Activated naive CD4-positive, alpha-beta T cell treated with anti-CD3 and anti-CD28 coated beads for 36 hours (primary cell): ENCODE measurements at regions of chr1 and their contacts with region 1.

Region 1: GRCh38 chr1:156226116-156226538 is 13.3 kb downstream of the PMF1 start:
- DNase-seq: peak; percentile 59
- H3K4me3 Mint-ChIP-seq: no peak overlapping the region
- H3K27ac Mint-ChIP-seq: peak overlapping the region; percentile 100
- H3K4me1 Mint-ChIP-seq: peaks cover 59% of the 10 kb centered on the region
- H3K27me3 Mint-ChIP-seq: no peaks in the 10 kb centered on the region

Region 2: GRCh38 chr1:155940531-155940992 is 285.6 kb before region 1 on chr1:
- CTCF ChIA-PET with region 1: no interaction called
- intact Hi-C with region 1: loop called (anchors 10 kb)
- DNase-seq: no peak
- H3K4me3 Mint-ChIP-seq: no peak overlapping the region
- H3K27ac Mint-ChIP-seq: peak overlapping the region; percentile 90
- H3K4me1 Mint-ChIP-seq: peaks cover 65% of the 10 kb centered on the region
- H3K27me3 Mint-ChIP-seq: no peaks in the 10 kb centered on the region

Region 3: GRCh38 chr1:156129706-156130581 is 96.2 kb before region 1 on chr1:
- CTCF ChIA-PET with region 1: interaction called, 23 read pairs
- intact Hi-C with region 1: loop called (anchors 1 kb)
- DNase-seq: peak; percentile 93
- H3K4me3 Mint-ChIP-seq: no peak overlapping the region
- H3K27ac Mint-ChIP-seq: no peak overlapping the region
- H3K4me1 Mint-ChIP-seq: peaks cover 50% of the 10 kb centered on the region
- H3K27me3 Mint-ChIP-seq: peaks cover 4% of the 10 kb centered on the region

Region 4: DNA sequence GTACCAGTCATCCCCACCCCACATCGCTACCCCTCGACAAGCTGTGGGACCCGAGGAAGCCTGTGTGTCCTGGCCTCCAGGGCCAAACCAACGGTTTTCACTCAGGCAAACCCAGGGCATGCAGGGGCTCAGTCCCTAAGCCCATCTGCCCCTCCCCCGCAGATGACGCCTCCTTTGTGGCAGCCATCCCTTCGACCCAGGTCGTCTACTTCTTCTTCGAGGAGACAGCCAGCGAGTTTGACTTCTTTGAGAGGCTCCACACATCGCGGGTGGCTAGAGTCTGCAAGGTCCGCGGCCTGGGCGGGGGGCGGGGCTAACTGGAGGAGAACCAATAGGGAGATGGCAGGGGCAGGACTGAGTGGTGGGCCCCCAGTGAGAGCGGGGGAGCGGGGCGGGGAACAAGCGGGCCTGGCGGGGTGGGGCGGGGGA is 65.4 kb before region 1 on chr1:
- CTCF ChIA-PET with region 1: interaction called, 7 read pairs
- intact Hi-C with region 1: loop called (anchors 1 kb)
- DNase-seq: peak; percentile 73
- H3K4me3 Mint-ChIP-seq: peak overlapping the region; percentile 63
- H3K27ac Mint-ChIP-seq: peak overlapping the region; percentile 83
- H3K4me1 Mint-ChIP-seq: peaks cover 69% of the 10 kb centered on the region
- H3K27me3 Mint-ChIP-seq: no peaks in the 10 kb centered on the region

Region 5: GRCh38 chr1:156212833-156213643 is 13.1 kb before region 1 on chr1 and contains the start of gene PMF1:
- CTCF ChIA-PET with region 1: interaction called, 54 read pairs
- intact Hi-C with region 1: loop called (anchors 1 kb)
- DNase-seq: peak; percentile 99
- H3K4me3 Mint-ChIP-seq: peak within 1 kb of the TSS; percentile 79
- H3K27ac Mint-ChIP-seq: peak within 1 kb of the TSS; percentile 97
- H3K4me1 Mint-ChIP-seq: peaks cover 46% of the 10 kb centered on the region
- H3K27me3 Mint-ChIP-seq: no peaks in the 10 kb centered on the region
- total RNA-seq, gene PMF1: 135 TPM

Region 6: DNA sequence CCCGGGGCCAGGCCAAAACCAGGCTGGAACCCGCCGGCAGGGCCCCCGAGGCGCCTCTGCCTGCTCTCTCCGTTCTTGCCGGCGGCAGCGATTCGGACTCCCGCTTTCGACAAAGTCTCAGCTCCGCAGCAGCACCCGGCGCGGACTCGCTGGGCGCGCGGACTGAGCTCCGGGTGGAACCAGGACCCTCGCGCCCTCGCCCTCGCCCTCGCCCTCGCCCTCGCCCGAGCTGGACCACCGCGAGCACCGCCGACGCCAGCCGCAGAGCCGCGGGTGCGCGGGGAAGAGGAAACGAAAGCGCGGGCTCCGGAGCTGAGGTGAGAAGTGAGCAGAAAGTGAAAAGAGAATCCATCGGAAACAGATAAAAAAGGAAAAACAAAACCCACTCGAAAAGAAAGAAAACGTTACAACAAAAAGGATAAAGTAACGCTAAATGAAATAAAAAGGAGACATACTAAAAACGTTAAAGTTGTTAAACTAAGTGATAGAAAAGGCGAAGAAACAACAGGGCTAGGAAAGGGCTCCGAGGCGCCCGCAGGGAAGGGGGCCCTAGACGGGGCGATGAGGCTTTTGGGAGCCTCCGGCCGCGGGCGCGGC is 209.5 kb after region 1 on chr1:
- CTCF ChIA-PET with region 1: no interaction called
- intact Hi-C with region 1: no loop called
- DNase-seq: peak; percentile 46
- H3K4me3 Mint-ChIP-seq: peak overlapping the region; percentile 73
- H3K27ac Mint-ChIP-seq: no peak overlapping the region
- H3K4me1 Mint-ChIP-seq: peaks cover 42% of the 10 kb centered on the region
- H3K27me3 Mint-ChIP-seq: peaks cover 78% of the 10 kb centered on the region

Region 7: DNA sequence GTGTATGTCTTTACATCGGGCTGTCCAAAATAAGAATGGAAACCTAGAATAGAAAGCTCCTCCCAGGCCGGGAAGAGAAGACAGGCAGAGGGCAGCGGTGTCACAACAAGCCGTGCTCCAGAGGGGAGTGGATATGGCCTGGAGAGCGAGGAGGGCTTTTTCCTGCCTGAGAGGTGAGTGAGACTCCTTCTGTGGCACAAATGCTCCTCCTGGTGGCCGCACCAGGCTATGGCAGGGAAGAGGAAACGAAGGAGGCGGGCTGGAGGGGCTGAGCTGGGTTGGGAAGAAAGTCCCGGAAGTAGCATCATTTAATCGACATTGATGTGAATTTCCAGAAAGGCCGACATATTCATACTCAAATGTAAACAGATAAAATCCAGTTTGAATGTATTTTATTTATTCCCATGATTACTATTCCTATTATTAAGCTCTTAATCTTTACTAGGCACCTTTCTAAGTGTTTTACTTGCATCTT is 219.7 kb after region 1 on chr1:
- CTCF ChIA-PET with region 1: interaction called, 3 read pairs
- intact Hi-C with region 1: loop called (anchors 5 kb)
- DNase-seq: peak; percentile 93
- H3K4me3 Mint-ChIP-seq: no peak overlapping the region
- H3K27ac Mint-ChIP-seq: peak overlapping the region; percentile 22
- H3K4me1 Mint-ChIP-seq: peaks cover 21% of the 10 kb centered on the region
- H3K27me3 Mint-ChIP-seq: peaks cover 28% of the 10 kb centered on the region

Region 8: DNA sequence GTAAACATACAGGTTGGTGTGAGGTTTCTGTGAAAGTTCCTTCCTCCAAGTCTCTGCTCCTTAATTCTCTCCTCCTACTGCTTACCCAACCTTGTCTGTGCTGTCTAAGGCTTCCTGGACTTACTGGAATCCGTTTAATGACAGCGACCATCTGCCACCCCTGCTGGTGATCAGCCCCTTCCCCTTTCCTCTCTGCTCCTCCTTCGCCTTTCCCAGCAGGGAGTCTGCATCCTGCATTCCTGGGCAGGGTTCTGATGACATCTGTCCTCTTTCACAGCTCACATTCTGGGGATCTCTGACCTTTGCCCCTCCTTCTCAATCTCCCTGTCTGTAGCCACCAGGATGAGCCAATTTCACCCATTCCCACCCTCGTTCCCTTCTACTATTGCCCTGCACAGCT is 1833.9 kb after region 1 on chr1:
- CTCF ChIA-PET with region 1: no interaction called
- intact Hi-C with region 1: no loop called
- DNase-seq: no peak
- H3K4me3 Mint-ChIP-seq: no peak overlapping the region
- H3K27ac Mint-ChIP-seq: no peak overlapping the region
- H3K4me1 Mint-ChIP-seq: no peaks in the 10 kb centered on the region
- H3K27me3 Mint-ChIP-seq: peaks cover 9% of the 10 kb centered on the region